Heart left ventricle (tissue), 16 donors: ENCODE measurements at regions of chr15 and their contacts with region 1.

Region 1: DNA sequence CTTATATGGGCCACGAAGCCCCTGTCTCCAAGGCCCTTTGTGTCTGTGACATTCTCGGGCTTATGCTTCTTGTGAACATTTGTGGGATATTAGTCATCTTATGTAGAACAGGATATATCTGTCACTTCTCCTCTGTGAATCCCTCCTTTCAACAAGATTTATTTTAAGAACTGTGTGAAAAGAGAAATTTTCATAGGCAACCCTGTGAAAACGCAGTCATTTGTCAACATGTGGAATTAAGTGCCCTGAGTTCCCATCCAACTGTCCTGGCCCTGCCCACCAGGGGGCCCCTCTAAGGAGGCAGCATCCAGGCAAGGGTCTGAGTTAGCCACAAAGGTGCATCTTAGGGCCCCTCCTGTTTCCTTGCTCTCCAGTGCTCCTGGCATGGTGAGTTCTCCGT is 76.8 kb upstream of the CHRNA7 start:
- DNase-seq: no peak
- ATAC-seq: no peak
- H3K4me3 ChIP-seq: no peak overlapping the region
- H3K27ac ChIP-seq: no peak overlapping the region
- H3K4me1 ChIP-seq: no peaks in the 10 kb centered on the region
- H3K27me3 ChIP-seq: peaks cover 0 to 13% (median 0%) of the 10 kb centered on the region in 9 donors
- CTCF ChIP-seq: no peak
- POLR2A ChIP-seq: no peak

Region 2: GRCh38 chr15:31887246-31887645 is 66.2 kb before region 1 on chr15:
- intact Hi-C with region 1: loop called in 1 of 10 experiments (anchors 10 kb)
- DNase-seq: no peak
- ATAC-seq: no peak
- H3K4me3 ChIP-seq: no peak overlapping the region
- H3K27ac ChIP-seq: no peak overlapping the region
- H3K4me1 ChIP-seq: no peaks in the 10 kb centered on the region
- H3K27me3 ChIP-seq: peaks cover 0 to 13% (median 6%) of the 10 kb centered on the region in 9 donors
- CTCF ChIP-seq: no peak
- POLR2A ChIP-seq: no peak

Region 3: GRCh38 chr15:31905054-31905453 is 48.4 kb before region 1 on chr15:
- intact Hi-C with region 1: loop called in 1 of 10 experiments (anchors 5 kb)
- DNase-seq: no peak
- ATAC-seq: peak in 3 of 4 donors; percentile 51 to 84 (median 80)
- H3K4me3 ChIP-seq: no peak overlapping the region
- H3K27ac ChIP-seq: no peak overlapping the region
- H3K4me1 ChIP-seq: peaks cover 0 to 10% (median 0%) of the 10 kb centered on the region in 12 donors
- H3K27me3 ChIP-seq: no peaks in the 10 kb centered on the region
- CTCF ChIP-seq: no peak
- POLR2A ChIP-seq: no peak

Region 4: GRCh38 chr15:32003558-32003957 is 50.1 kb after region 1 on chr15:
- intact Hi-C with region 1: no loop called
- DNase-seq: no peak
- ATAC-seq: no peak
- H3K4me3 ChIP-seq: no peak overlapping the region
- H3K27ac ChIP-seq: no peak overlapping the region
- H3K4me1 ChIP-seq: no peaks in the 10 kb centered on the region
- H3K27me3 ChIP-seq: peaks cover 0 to 13% (median 0%) of the 10 kb centered on the region in 9 donors
- CTCF ChIP-seq: no peak
- POLR2A ChIP-seq: no peak